ENCODE measurements at regions of chr2 and their contacts with region 1.

Region 1: GRCh38 chr2:204108330-204108751 is 171.8 kb downstream of the ICOS start:
- DNase-seq: peak; percentile 73
- H3K4me3 ChIP-seq: no peak overlapping the region
- H3K27ac ChIP-seq: peak overlapping the region; percentile 74
- H3K4me1 ChIP-seq: peaks cover 47% of the 10 kb centered on the region
- H3K27me3 ChIP-seq: no peaks in the 10 kb centered on the region
- CTCF ChIP-seq: peak; percentile 25 to 59
- POLR2A ChIP-seq: no peak

Region 2: GRCh38 chr2:204177977-204178540 is 69.7 kb after region 1 on chr2:
- CTCF ChIA-PET with region 1: interaction called, 36 read pairs
- POLR2A ChIA-PET with region 1: no interaction called
- dilution Hi-C with region 1: no loop called
- intact Hi-C with region 1: loop called (anchors 1 kb)
- DNase-seq: peak; percentile 34
- H3K4me3 ChIP-seq: no peak overlapping the region
- H3K27ac ChIP-seq: no peak overlapping the region
- H3K4me1 ChIP-seq: no peaks in the 10 kb centered on the region
- H3K27me3 ChIP-seq: peaks cover 5 to 8% of the 10 kb centered on the region in 2 experiments
- CTCF ChIP-seq: peak; percentile 61 to 63
- POLR2A ChIP-seq: no peak

Region 3: DNA sequence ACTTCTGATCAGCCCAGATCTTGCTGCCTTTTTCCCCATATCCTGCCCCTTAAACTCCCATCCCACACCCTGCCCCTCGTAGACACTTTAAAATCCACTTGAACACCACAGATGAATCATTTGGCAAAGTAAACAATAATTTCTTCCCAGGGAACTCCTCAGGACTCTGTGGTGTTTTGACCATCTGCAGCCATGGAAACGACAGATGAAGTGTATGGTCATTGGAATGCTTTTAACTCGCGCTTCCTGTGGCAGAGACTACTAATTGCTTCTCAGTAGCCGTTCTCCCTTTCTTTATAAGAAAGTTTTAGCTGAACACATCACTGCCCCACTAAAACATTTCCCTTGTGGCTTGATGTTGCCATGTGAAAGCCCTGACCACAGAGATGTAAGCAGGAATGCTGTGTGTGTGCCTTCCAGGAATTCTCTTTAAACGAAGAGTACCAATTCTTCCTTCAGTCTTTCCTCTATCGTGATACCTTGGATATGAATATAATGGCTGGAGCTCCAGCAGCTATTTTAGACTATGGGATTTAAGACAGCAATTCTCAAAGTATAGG is 344.2 kb after region 1 on chr2:
- CTCF ChIA-PET with region 1: no interaction called
- POLR2A ChIA-PET with region 1: no interaction called
- dilution Hi-C with region 1: no loop called
- intact Hi-C with region 1: loop called (anchors 1 kb)
- DNase-seq: peak; percentile 99
- H3K4me3 ChIP-seq: no peak overlapping the region
- H3K27ac ChIP-seq: peak overlapping the region; percentile 92
- H3K4me1 ChIP-seq: peaks cover 24% of the 10 kb centered on the region
- H3K27me3 ChIP-seq: no peaks in the 10 kb centered on the region
- CTCF ChIP-seq: no peak
- POLR2A ChIP-seq: no peak

Region 4: DNA sequence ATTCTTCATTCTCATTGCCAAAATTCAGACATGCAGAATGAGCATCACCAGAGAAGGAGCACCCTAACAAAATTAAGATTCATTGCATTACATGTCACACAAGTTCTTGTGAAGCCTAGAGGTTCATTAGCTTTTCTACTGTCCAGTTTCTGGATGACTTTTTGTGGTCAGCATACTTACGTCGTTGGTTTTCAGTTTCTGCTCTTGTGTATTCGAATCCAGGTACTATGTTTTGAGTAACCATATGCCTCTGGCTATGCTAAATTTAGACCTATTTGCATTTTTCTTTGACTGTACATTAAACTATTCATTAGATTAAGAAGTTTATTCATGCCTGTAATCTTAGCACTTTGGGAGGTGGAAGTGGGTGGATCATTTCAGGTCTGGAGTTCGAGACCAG is 688.2 kb after region 1 on chr2:
- CTCF ChIA-PET with region 1: no interaction called
- POLR2A ChIA-PET with region 1: no interaction called
- dilution Hi-C with region 1: no loop called
- intact Hi-C with region 1: loop called (anchors 10 kb)
- DNase-seq: no peak
- H3K4me3 ChIP-seq: no peak overlapping the region
- H3K27ac ChIP-seq: no peak overlapping the region
- H3K4me1 ChIP-seq: peaks cover 22% of the 10 kb centered on the region
- H3K27me3 ChIP-seq: no peaks in the 10 kb centered on the region
- CTCF ChIP-seq: no peak
- POLR2A ChIP-seq: no peak

Region 5: DNA sequence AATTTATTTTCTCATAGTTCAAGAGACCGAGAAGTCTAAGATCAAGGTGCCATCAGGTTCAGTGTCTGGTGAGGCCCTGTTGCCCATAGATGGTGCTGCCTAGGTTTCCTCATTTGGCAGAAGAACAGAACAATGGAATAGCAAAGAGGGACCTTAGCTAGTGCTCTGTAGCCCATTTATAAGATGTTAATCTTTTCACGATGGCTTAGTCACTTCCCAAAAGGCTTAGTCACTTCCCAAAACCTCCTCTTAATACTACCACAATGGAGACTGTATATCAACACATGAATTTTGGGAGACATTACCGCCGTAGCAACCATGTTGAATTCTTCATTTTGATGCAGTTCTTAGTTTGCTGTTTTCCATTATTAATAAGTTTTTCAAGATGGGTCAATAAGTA is 1327.6 kb after region 1 on chr2:
- CTCF ChIA-PET with region 1: no interaction called
- POLR2A ChIA-PET with region 1: no interaction called
- dilution Hi-C with region 1: no loop called
- intact Hi-C with region 1: loop called (anchors 1 kb)
- DNase-seq: peak; percentile 84
- H3K4me3 ChIP-seq: no peak overlapping the region
- H3K27ac ChIP-seq: peak overlapping the region; percentile 65
- H3K4me1 ChIP-seq: peaks cover 9% of the 10 kb centered on the region
- H3K27me3 ChIP-seq: no peaks in the 10 kb centered on the region
- CTCF ChIP-seq: peak in 1 of 2 donors; percentile 1
- POLR2A ChIP-seq: no peak

Region 6: GRCh38 chr2:205885492-205886099 is 1777.3 kb after region 1 on chr2:
- CTCF ChIA-PET with region 1: interaction called, 3 read pairs
- POLR2A ChIA-PET with region 1: no interaction called
- dilution Hi-C with region 1: no loop called
- intact Hi-C with region 1: loop called (anchors 1 kb)
- DNase-seq: peak; percentile 76
- H3K4me3 ChIP-seq: no peak overlapping the region
- H3K27ac ChIP-seq: no peak overlapping the region
- H3K4me1 ChIP-seq: peaks cover 5% of the 10 kb centered on the region
- H3K27me3 ChIP-seq: peaks cover 0 to 2% of the 10 kb centered on the region in 2 experiments
- CTCF ChIP-seq: peak; percentile 90 to 93
- POLR2A ChIP-seq: no peak